BJ (cell line): ENCODE measurements at regions of chr2 and their contacts with region 1.

Region 1: DNA sequence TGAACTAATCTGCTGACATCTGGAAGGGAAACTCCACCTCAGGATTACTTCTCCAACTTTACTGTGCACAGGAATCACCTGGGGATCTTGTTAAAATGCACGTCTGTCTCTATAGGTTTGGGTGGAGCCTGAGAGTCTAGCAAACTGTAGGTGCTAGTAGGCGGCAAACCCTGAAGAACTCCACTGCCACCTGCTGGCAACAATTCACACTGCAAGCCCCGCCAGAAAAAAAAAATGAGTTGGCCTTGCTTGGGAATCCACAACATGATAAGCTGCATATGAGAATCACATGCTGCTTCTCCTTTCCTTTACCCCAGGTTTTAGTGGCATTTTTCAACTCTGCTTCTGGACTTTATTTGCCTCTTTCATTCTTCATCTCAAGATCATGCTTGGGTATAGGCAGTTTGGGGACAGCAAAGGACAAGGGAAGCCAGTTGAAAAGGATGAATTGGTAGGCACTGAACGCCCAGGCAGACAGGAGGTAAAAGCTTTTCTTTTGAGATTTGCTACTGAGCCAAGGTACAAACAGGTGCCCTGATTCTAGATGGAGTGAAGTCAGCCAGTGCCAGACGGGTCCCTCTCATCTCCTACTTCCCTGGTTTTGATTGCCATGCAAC is 88.8 kb downstream of the VIT start:
- DNase-seq: peak; percentile 35
- H3K4me3 ChIP-seq: no peak overlapping the region
- H3K27me3 ChIP-seq: no peaks in the 10 kb centered on the region
- CTCF ChIP-seq: peak; percentile 96

Region 2: GRCh38 chr2:36355151-36355889 is 430.0 kb before region 1 on chr2 and contains the start of gene CRIM1:
- CTCF ChIA-PET with region 1: interaction called, 12 read pairs
- POLR2A ChIA-PET with region 1: interaction called, 3 read pairs
- DNase-seq: no peak
- H3K4me3 ChIP-seq: peak within 1 kb of the TSS; percentile 97
- H3K27me3 ChIP-seq: no peaks in the 10 kb centered on the region
- CTCF ChIP-seq: no peak
- polyA plus RNA-seq, gene CRIM1: 427 and 729 TPM in 2 replicates

Region 3: DNA sequence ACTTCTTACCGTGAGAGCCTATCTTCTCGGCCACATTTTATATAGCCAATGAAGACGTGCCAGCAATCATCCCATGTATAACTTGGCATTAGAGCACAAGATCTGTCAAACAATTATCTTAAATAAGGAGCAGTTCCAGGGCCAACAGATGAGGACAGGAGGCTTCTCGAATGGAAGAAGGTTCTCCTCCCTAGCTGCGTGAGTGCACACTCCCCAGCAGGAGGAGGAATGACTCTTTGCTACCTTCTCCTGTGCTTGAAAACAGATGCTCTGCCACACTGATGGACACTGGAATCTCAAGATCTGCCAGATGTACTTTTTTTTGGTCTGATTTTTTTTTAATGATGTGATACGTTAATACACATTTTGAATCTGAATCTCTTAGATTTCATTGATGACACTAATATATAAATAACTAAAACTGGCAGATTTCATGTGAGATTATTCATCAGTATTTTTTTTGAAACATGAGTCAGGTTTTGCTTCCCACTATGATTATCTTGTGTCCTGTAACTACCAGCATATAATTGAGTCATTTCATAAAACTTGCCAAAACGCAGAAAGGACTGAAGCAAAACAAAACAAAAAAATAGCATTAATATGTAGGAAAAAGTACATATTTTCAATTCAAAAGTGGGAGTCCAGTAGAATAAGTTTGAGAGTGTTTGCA is 89.4 kb before region 1 on chr2:
- CTCF ChIA-PET with region 1: interaction called, 28 read pairs
- POLR2A ChIA-PET with region 1: no interaction called
- DNase-seq: peak; percentile 37
- H3K4me3 ChIP-seq: peak overlapping the region; percentile 0; the same call in 1 of the 2 replicates
- H3K27me3 ChIP-seq: no peaks in the 10 kb centered on the region
- CTCF ChIP-seq: peak; percentile 73

Region 4: DNA sequence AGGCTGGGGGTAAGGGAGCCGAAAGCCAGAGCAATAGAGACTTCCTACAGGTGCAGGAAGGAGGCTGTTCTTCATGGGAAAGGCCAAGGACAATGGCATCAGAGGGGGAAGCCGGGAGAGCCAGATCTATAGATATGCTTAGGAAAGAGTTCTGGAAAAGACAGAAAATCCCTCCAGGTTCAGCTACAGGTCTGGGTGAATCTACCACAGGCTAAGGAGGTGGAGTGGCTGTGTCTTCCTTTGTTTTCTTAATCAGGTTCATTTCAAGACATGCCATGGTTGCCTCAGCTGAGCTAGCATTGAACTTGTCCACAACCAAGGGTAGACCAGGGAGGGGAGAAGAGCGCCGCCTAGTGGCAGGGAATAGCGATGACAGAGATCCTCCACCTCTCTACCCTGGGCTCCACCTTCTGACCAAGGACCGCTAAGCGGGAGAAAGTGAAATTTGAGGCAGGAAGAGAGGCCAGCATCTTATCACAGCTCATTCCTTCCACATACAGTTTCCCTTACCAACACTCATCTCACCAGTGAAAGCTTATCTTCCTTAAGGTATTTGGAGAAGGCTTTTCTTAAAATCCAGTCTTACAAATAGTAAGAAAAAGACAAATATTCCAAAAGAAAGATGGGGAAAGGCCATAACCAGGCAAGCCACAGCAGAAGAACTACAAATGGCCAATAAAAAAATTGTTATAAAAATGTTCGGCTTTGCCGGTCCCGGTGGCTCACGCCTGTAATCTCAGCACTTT is 14.6 kb before region 1 on chr2:
- CTCF ChIA-PET with region 1: interaction called, 11 read pairs
- POLR2A ChIA-PET with region 1: interaction called, 4 read pairs
- DNase-seq: no peak
- H3K4me3 ChIP-seq: no peak overlapping the region
- H3K27me3 ChIP-seq: no peaks in the 10 kb centered on the region
- CTCF ChIP-seq: peak; percentile 69

Region 5: DNA sequence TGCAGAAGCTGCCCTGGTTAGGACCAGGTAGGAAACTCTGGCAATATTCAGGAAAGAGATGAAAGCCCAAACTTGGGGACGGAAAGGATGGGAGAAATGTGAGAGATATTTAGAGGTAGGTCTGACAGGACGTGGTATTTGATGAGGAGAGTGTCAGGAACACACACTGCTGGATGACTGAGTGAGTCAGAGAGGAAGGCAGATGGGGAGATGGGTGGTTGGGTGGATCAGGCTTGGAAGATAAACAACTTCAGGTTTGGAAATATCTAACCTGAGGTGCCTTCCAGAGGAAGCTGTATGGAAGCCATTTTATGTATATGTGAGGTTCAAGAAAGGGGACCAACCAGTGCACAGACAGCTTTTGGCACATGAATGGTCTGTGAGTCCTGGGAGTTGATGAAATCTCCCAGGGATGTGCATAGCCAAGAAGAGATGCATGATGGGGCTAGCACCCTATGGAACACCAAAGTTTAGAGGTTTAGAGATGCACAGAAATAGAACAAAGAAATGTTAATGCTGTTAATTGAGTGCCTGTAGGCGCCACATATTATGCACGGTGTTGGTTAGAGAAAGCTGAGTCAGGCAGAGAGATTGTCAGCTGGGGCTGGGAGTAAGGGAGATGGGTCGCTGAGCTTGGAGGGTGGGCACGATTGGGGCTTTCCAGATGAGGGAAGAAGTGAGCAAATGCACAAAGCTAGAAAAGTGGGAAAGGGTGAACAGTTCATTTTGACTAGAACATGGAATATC is 12.2 kb after region 1 on chr2:
- CTCF ChIA-PET with region 1: interaction called, 48 read pairs
- POLR2A ChIA-PET with region 1: no interaction called
- DNase-seq: no peak
- H3K4me3 ChIP-seq: no peak overlapping the region
- H3K27me3 ChIP-seq: no peaks in the 10 kb centered on the region
- CTCF ChIP-seq: no peak